ENCODE measurements at regions of chr16 and their contacts with region 1.

Region 1: GRCh38 chr16:68085259-68086071 is at the start of gene NFATC3:
- DNase-seq: peak; percentile 98 to 99
- H3K4me3 ChIP-seq: peak within 1 kb of the TSS; percentile 70 to 77
- H3K27ac ChIP-seq: peak within 1 kb of the TSS; percentile 93 to 99
- H3K4me1 ChIP-seq: peaks cover 0 to 39% (median 22%) of the 10 kb centered on the region in 4 donors
- H3K27me3 ChIP-seq: no peaks in the 10 kb centered on the region
- CTCF ChIP-seq: no peak

Region 2: DNA sequence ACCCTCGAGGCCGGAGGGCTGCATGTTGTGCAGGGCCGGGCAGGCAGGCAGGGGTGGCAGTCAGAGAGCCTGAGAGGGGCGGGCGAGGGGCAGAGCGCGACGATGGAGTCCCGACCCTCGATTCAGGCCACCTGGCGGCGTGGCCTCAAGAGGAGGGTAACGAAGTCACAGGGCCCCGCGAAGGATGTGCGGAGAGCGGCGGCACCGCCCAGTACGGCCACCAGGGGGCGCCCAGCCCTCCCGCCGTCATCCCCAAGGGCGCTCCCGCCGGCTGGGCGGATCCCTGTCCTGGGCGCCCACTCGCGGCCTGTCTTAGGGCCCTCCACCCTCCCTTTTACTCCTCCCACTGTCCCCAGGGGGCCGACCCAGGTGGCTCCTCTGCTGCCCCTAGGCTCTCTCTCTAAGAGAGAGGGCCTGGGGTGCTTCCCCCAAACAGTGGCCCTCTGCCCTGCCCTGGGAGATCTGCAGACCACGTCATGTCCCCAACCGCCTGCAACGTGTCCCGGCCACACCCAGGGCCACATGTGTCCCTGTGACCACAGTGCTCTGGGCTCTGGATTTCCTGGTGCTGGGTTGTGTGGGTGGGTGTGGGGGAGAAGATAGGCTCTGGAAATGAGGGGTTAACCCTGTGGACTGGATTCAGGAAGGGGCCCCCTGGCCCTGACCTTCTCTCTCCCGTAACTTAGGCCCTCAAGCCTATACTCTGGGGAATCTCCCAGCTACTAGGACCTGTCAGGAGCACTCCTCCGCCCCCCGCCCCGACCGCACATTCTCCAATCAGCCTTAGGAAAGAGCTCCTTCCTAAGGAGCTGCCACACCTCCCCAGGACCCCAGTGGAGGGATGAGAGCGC is 92.1 kb before region 1 on chr16:
- intact Hi-C with region 1: no loop called
- DNase-seq: peak; percentile 67 to 84
- H3K4me3 ChIP-seq: peak overlapping the region; percentile 20 to 50
- H3K27ac ChIP-seq: peak overlapping the region; percentile 24 to 31
- H3K4me1 ChIP-seq: peaks cover 0 to 12% (median 9%) of the 10 kb centered on the region in 4 donors
- H3K27me3 ChIP-seq: no peaks in the 10 kb centered on the region
- CTCF ChIP-seq: peak; percentile 97 to 99

Region 3: GRCh38 chr16:68022704-68023522 is 62.6 kb before region 1 on chr16 and contains the starts of genes DDX28 and DUS2:
- intact Hi-C with region 1: loop called (anchors 2 kb)
- DNase-seq: peak; percentile 89 to 94
- H3K4me3 ChIP-seq: peak within 1 kb of the TSS; percentile 73 to 99
- H3K27ac ChIP-seq: peak within 1 kb of the TSS; percentile 79 to 84
- H3K4me1 ChIP-seq: peaks cover 3 to 29% (median 19%) of the 10 kb centered on the region in 4 donors
- H3K27me3 ChIP-seq: no peaks in the 10 kb centered on the region
- CTCF ChIP-seq: peak in 1 of 2 experiments; percentile 12

Region 4: GRCh38 chr16:68237243-68238028 is 152.0 kb after region 1 on chr16:
- intact Hi-C with region 1: loop called (anchors 10 kb)
- DNase-seq: peak; percentile 98 to 99
- H3K4me3 ChIP-seq: peak overlapping the region; percentile 60 to 88
- H3K27ac ChIP-seq: peak overlapping the region; percentile 84 to 86
- H3K4me1 ChIP-seq: peaks cover 0 to 41% (median 23%) of the 10 kb centered on the region in 4 donors
- H3K27me3 ChIP-seq: no peaks in the 10 kb centered on the region
- CTCF ChIP-seq: peak in 1 of 2 experiments; percentile 6

Measured in tibial artery (tissue), 4 donors.